ENCODE measurements at regions of chr22 and their contacts with region 1.

Region 1: GRCh38 chr22:36123673-36124630 is 36.6 kb downstream of the APOL3 start:
- DNase-seq: peak; percentile 93
- ATAC-seq: peak; percentile 99
- H3K4me3 ChIP-seq: no peak overlapping the region
- H3K27ac ChIP-seq: peak overlapping the region; percentile 58
- H3K4me1 ChIP-seq: no peaks in the 10 kb centered on the region
- H3K27me3 ChIP-seq: peaks cover 2% of the 10 kb centered on the region; the same call in 1 of the 2 replicates
- CTCF ChIP-seq: peak; percentile 99
- POLR2A ChIP-seq: peak; percentile 67; the same call in 1 of the 2 replicates
- RAD21 ChIP-seq: peak; percentile 100

Region 2: DNA sequence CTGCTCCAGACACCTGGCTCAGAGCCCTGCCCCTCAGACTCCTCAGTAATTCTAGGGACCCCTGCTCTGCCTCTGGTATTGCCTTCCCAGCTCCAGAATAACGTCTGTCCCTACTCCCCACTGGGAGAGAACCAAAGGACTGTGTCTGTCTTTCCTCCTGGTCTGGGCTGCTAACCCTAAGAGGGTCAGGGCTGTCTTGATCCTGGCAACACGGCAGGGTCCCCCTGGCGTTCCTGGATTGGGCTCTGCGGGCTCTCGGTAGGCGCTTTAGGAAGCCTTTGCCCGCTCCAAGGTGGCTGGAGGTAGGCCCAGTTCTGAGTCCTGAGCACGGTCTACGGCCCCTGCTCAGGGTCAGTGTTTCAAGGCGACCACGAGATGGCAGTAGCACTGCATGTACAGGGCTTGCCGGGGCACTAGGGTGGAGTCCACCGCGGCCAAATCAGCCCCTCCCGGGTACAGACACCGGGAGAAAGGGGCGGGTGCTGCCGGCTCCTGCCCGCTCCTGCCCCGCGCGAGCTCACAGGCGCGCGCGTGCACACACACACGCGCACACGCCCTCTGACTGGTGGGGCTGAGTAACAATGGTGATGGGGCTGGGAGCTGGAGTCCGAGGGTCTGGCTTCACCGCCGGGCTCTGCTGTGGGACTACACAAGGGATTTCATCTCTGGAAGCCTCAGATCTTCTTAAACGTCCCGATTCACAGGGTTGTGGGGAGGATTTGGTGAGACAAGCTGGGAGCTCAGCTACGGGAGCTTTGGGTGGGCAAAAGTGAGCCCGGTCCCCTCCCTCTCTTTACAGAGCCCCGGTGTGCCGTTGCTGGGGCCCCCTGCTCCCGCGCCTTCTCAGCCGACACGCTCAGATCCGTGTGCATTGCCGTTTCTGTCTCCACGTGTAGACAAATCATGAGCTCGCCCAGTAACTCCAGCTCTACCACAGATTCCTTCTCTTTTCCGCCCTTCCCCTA is 773.1 kb before region 1 on chr22:
- CTCF ChIA-PET with region 1: no interaction called
- POLR2A ChIA-PET with region 1: no interaction called
- dilution Hi-C with region 1: no loop called
- in situ Hi-C with region 1: loop called (anchors 10 kb)
- intact Hi-C with region 1: loop called (anchors 2 kb)
- DNase-seq: peak; percentile 89
- ATAC-seq: peak; percentile 94
- H3K4me3 ChIP-seq: peak overlapping the region; percentile 43
- H3K27ac ChIP-seq: peak overlapping the region; percentile 38
- H3K4me1 ChIP-seq: peaks cover 12% of the 10 kb centered on the region
- H3K27me3 ChIP-seq: no peaks in the 10 kb centered on the region
- CTCF ChIP-seq: peak; percentile 95
- POLR2A ChIP-seq: peak; percentile 60; the same call in 1 of the 2 replicates
- RAD21 ChIP-seq: peak; percentile 95

Region 3: GRCh38 chr22:35627264-35628041 is 496.5 kb before region 1 on chr22:
- CTCF ChIA-PET with region 1: no interaction called
- POLR2A ChIA-PET with region 1: no interaction called
- dilution Hi-C with region 1: no loop called
- in situ Hi-C with region 1: loop called (anchors 10 kb)
- intact Hi-C with region 1: loop called (anchors 1 kb)
- DNase-seq: peak; percentile 90
- ATAC-seq: peak; percentile 77
- H3K4me3 ChIP-seq: peak overlapping the region; percentile 50
- H3K27ac ChIP-seq: peak overlapping the region; percentile 82
- H3K4me1 ChIP-seq: peaks cover 9% of the 10 kb centered on the region
- H3K27me3 ChIP-seq: no peaks in the 10 kb centered on the region
- CTCF ChIP-seq: peak; percentile 81
- POLR2A ChIP-seq: no peak
- RAD21 ChIP-seq: peak; percentile 88

Region 4: DNA sequence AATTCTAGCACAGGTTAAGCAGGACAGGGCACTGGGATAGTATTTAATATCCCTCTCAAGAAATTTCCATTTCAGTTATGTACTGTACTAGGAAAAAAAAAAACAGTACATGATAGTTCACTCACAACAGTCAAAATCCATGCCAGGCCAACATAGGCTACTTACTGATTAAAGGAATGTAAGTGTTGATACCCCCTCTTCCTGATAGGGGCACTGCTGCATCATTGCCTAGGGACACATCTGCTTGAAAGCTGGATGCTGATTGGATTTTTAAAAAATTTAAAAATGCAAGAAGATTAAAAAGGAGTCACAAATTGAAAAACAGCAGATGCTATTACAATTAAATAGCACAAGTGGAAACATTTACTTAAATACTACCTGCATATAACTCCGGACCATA is 362.9 kb before region 1 on chr22:
- CTCF ChIA-PET with region 1: no interaction called
- POLR2A ChIA-PET with region 1: no interaction called
- dilution Hi-C with region 1: no loop called
- in situ Hi-C with region 1: no loop called
- intact Hi-C with region 1: loop called (anchors 5 kb)
- DNase-seq: peak; percentile 24
- ATAC-seq: peak; percentile 32; the same call in 1 of the 2 replicates
- H3K4me3 ChIP-seq: no peak overlapping the region
- H3K27ac ChIP-seq: no peak overlapping the region
- H3K4me1 ChIP-seq: no peaks in the 10 kb centered on the region
- H3K27me3 ChIP-seq: no peaks in the 10 kb centered on the region
- CTCF ChIP-seq: peak; percentile 30; the same call in 1 of the 2 replicates
- POLR2A ChIP-seq: no peak
- RAD21 ChIP-seq: peak; percentile 40

Region 5: DNA sequence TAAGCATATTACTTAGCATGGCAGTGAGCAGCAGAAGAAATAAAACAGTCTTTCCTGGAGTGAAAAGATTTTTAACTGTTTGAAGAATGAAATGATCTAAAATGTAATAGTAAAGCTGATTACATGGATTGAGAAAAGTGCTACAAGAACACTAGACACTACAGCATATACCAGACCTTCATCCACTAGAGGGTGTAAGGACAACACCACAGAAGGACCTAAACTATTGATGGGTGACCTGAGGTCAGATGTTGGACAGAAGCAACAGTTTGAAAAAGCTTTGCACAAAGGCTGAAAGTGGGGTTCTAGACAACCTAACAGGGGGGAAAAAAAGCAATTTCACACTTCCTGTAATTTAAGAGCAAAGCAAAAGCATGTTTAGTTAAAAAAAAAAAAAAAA is 193.0 kb before region 1 on chr22:
- CTCF ChIA-PET with region 1: interaction called, 17 read pairs
- POLR2A ChIA-PET with region 1: interaction called, 3 read pairs
- dilution Hi-C with region 1: no loop called
- in situ Hi-C with region 1: loop called (anchors 5 kb)
- intact Hi-C with region 1: loop called (anchors 1 kb)
- DNase-seq: peak; percentile 80
- ATAC-seq: peak; percentile 94
- H3K4me3 ChIP-seq: no peak overlapping the region
- H3K27ac ChIP-seq: no peak overlapping the region
- H3K4me1 ChIP-seq: peaks cover 4% of the 10 kb centered on the region
- H3K27me3 ChIP-seq: no peaks in the 10 kb centered on the region
- CTCF ChIP-seq: peak; percentile 78
- POLR2A ChIP-seq: no peak
- RAD21 ChIP-seq: peak; percentile 89

Region 6: GRCh38 chr22:36065775-36066559 is 58.0 kb before region 1 on chr22:
- CTCF ChIA-PET with region 1: interaction called, 3 read pairs
- POLR2A ChIA-PET with region 1: no interaction called
- dilution Hi-C with region 1: no loop called
- in situ Hi-C with region 1: no loop called
- intact Hi-C with region 1: loop called (anchors 1 kb)
- DNase-seq: peak; percentile 92
- ATAC-seq: peak; percentile 94
- H3K4me3 ChIP-seq: peak overlapping the region; percentile 52
- H3K27ac ChIP-seq: peak overlapping the region; percentile 64
- H3K4me1 ChIP-seq: peaks cover 5% of the 10 kb centered on the region
- H3K27me3 ChIP-seq: no peaks in the 10 kb centered on the region
- CTCF ChIP-seq: peak; percentile 81
- POLR2A ChIP-seq: no peak
- RAD21 ChIP-seq: peak; percentile 70

Region 7: DNA sequence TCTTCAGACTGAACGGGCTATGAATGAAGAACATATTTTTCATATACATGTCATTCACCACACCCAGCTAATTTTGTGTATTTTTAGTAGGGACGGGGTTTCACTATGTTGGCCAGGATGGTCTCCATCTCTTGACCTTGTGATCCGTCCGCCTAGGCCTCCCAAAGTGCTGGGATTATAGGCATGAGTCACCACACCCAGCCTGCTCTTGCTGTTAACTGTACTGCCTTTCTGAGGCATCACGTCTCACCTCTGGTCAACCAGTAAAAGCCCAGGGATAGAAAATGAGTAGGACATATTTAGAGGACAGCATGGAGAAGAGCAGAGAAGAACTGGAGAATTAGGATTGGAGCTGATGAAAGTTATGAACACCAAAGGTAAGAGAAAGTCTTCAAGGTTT is 19.0 kb before region 1 on chr22:
- CTCF ChIA-PET with region 1: no interaction called
- POLR2A ChIA-PET with region 1: no interaction called
- dilution Hi-C with region 1: no loop called
- in situ Hi-C with region 1: no loop called
- intact Hi-C with region 1: no loop called
- DNase-seq: peak; percentile 36
- ATAC-seq: no peak; the same call in 1 of the 2 replicates
- H3K4me3 ChIP-seq: no peak overlapping the region
- H3K27ac ChIP-seq: no peak overlapping the region
- H3K4me1 ChIP-seq: no peaks in the 10 kb centered on the region
- H3K27me3 ChIP-seq: no peaks in the 10 kb centered on the region; the same call in none of the 2 replicates
- CTCF ChIP-seq: no peak
- POLR2A ChIP-seq: no peak
- RAD21 ChIP-seq: no peak